Stomach (tissue), 19 donors: ENCODE measurements at regions of chr11 and their contacts with region 1.

Region 1: DNA sequence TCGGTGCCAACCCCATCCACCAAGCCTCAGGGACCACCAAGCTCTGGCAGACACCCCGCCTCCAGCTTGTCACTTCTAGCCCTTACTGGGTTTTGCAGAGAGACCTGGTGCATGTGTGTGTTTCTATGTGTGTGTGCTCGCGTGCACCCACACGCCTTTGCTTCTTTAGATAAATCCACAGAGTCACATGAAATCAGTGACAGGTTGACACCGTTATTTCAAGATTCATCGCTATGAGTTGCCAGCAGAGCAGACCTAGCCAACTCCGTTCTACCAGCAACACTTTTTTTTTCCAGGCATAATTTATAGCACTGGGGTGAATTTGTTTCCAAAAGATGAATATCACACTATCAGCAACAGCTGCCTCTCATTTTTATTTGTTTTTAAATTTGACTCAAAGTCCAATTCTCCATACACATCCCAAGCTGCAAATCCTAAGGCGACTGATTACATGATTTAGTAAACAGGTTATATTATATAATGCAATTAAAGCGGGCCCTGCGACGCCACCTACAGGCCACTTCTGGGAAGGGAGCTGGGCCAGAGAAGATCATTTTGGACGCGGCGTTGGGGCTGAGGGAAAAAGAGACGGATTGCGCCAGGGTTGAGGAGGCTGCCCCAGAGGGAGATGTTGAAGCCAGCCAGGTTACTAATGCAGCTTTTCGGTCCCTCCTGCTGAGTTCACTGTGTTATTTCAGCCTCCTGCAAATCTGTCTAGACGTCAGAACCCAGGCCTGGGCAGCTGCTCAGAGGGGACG is 150.5 kb downstream of the FEZ1 start:
- DNase-seq: peak; percentile 76 to 90
- H3K4me3 ChIP-seq: no peak overlapping the region
- H3K27ac ChIP-seq: peak overlapping the region in 4 of 5 donors; percentile 3 to 83 (median 28)
- H3K4me1 ChIP-seq: peaks cover 0 to 30% (median 10%) of the 10 kb centered on the region in 4 donors
- H3K27me3 ChIP-seq: no peaks in the 10 kb centered on the region
- CTCF ChIP-seq: peak in 5 of 7 experiments; percentile 64 to 94 (median 80)
- EP300 ChIP-seq: no peak
- POLR2A ChIP-seq: no peak

Region 2: DNA sequence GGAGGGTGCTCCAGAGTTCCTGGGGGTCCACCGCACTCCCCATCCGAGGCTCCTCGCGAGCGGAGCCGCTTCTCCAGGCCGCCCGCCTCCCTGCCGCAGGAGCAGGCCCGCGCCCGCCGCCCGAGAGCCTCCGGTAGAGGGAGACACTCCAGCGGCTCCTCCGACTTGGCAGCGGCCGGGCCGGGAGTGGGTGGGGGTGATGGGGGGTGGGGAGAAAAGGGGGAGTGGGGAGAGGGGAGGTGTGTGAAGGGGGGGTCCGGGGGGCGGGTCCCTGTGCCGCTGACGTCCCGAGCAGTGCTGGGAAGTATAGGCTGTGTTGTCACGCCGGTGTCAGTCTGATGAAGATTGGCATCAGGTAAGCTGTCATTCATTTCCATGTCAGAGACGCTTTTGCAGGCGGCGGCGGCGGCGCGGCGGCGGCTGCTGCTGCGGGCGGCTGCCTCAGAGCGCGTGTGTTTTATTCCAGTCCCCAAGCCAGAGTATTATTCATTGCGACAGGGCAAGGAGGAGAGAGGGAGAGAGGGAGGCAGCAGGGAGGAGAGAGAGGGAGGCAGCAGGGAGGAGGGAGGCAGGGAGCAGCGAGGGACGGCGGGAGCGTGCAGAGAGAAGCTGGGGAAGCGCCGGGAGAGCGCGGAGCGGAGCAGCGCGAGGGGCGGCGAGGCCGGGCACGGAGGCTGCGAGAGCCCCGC is 181.0 kb before region 1 on chr11 and contains the start of gene PKNOX2:
- intact Hi-C with region 1: loop called (anchors 5 kb)
- DNase-seq: peak; percentile 73 to 93
- H3K4me3 ChIP-seq: peak within 1 kb of the TSS; percentile 57 to 81 (median 65)
- H3K27ac ChIP-seq: peak within 1 kb of the TSS; percentile 74 to 92 (median 80)
- H3K4me1 ChIP-seq: peaks cover 38 to 62% (median 51%) of the 10 kb centered on the region in 4 donors
- H3K27me3 ChIP-seq: peaks cover 0 to 40% (median 31%) of the 10 kb centered on the region in 3 donors
- CTCF ChIP-seq: peak in 5 of 7 experiments; percentile 16 to 73 (median 65)
- EP300 ChIP-seq: no peak
- POLR2A ChIP-seq: no peak
- total RNA-seq, gene PKNOX2: 1.3 to 4.9 (median 2.8) TPM in 4 of 5 donors, not detected in the other